ENCODE measurements at regions of chr12 and their contacts with region 1.

Region 1: GRCh38 chr12:43776498-43776897 is 17.7 kb downstream of the IRAK4 start:
- DNase-seq: peak in 7 of 9 donors; percentile 19 to 55 (median 38)
- ATAC-seq: peak; percentile 66
- H3K4me3 ChIP-seq: no peak overlapping the region
- H3K4me3 Mint-ChIP-seq: no peak overlapping the region
- H3K27ac ChIP-seq: no peak overlapping the region
- H3K27ac Mint-ChIP-seq: no peak overlapping the region
- H3K4me1 ChIP-seq: no peaks in the 10 kb centered on the region
- H3K4me1 Mint-ChIP-seq: peaks cover 0 to 12% (median 6%) of the 10 kb centered on the region in 7 donors
- H3K27me3 ChIP-seq: no peaks in the 10 kb centered on the region
- H3K27me3 Mint-ChIP-seq: no peaks in the 10 kb centered on the region

Region 2: GRCh38 chr12:43937947-43938346 is 161.4 kb after region 1 on chr12:
- CTCF ChIA-PET with region 1: no interaction called
- POLR2A ChIA-PET with region 1: no interaction called
- intact Hi-C with region 1: loop called in 1 of 2 experiments (anchors 5 kb)
- DNase-seq: no peak
- ATAC-seq: no peak
- H3K4me3 ChIP-seq: no peak overlapping the region
- H3K4me3 Mint-ChIP-seq: no peak overlapping the region
- H3K27ac ChIP-seq: no peak overlapping the region
- H3K27ac Mint-ChIP-seq: no peak overlapping the region
- H3K4me1 ChIP-seq: no peaks in the 10 kb centered on the region
- H3K4me1 Mint-ChIP-seq: no peaks in the 10 kb centered on the region
- H3K27me3 ChIP-seq: no peaks in the 10 kb centered on the region
- H3K27me3 Mint-ChIP-seq: no peaks in the 10 kb centered on the region